ENCODE measurements at regions of chr2 and their contacts with region 1.

Region 1: DNA sequence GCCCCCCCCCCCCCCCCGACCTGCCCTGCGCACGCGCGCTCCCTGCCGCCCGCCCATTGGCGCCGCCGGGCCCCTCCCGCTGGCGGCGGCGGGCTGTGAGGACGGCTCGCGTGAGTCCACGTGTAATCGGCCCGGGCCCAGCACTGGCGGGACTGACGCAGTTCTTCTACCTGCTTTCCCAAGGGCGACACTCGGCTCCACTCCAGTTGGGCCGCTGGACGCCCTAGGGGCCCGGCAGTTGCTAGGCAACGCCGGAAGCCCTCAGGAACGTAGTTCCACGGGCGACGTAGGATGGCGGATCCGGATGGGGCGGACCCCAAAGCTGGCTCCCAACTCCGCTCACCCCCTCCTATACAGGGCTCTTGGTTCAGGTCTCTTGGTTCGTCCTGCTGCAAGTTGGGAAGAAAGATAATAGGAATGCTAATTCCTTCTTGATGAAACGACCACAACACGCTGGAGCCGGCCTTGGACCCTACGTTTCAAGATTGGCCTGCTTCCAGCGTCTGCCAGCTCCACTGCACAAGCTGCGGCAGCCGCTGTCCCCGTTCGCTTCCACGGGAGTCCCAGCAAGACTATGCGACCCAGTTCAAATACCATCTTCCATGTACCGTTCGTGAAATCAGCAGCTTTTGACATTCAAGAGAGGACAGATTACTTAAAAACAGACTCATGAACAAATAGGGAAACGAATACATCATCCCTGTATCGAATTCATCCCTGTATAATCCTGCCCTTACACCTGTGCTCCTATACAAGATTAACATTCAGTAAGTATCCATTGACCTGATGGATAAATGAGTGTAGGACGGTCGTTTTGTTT is 415 bp upstream of the MCFD2 start:
- DNase-seq: peak; percentile 95 to 97 (median 96)
- ATAC-seq: peak; percentile 94 to 95
- H3K4me3 ChIP-seq: peak overlapping the region; percentile 95
- H3K27ac ChIP-seq: peak overlapping the region; percentile 95
- H3K4me1 ChIP-seq: peaks cover 11% of the 10 kb centered on the region
- H3K27me3 ChIP-seq: no peaks in the 10 kb centered on the region

Region 2: GRCh38 chr2:47323009-47323821 is 407.2 kb after region 1 on chr2:
- intact Hi-C with region 1: loop called in 1 of 4 experiments (anchors 5 kb)
- DNase-seq: peak; percentile 65 to 86 (median 84)
- ATAC-seq: peak; percentile 94 to 95
- H3K4me3 ChIP-seq: no peak overlapping the region
- H3K27ac ChIP-seq: no peak overlapping the region
- H3K4me1 ChIP-seq: no peaks in the 10 kb centered on the region
- H3K27me3 ChIP-seq: no peaks in the 10 kb centered on the region

Measured in right cardiac atrium (tissue), 5 donors.